ENCODE measurements at regions of chr19 and their contacts with region 1.

Region 1: DNA sequence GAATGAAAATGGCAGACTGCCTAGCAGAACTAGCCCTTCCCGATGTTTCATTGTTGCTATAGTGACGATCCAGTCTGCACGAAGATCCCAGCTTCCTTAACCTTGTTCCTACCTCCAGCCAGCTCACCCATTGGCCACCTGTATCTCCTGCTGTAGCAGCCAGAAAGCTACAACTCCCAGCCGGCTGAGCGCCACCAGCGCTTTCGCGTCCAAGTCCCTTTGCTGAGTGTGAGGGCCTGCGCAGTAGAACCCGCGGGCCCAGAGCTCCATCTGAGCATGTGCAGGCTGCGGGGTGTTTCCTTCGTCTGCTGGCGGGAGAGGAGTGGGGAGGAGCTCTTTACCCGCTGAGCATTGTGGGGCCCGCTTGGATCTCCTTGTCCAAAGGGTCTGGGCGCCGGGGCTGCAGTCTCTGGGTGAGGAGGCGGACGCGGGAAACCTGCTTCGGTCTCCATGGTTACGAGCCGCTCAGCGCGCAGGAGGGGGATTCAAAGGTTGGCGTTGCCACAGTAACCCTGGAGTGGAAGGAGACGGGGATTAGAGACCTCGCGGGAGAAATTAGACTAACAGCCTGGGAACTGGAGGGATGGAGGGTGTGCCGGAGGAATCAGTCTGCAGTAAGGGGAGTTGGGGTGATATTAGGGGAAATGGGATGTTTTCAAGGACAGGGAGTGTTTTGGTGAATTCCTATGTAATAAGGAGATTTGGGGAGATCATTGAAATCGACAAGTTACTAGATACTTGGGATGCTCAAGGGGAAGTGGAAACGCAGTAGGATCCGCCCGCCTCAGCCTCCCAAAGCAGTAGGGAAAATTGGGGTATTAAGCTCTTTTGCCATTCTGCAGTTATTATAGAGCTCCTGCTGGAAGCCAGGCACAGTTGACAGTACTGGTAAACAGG is 33.5 kb downstream of the ZSWIM9 start:
- DNase-seq: peak; percentile 97
- H3K4me3 Mint-ChIP-seq: no peak overlapping the region
- H3K27ac Mint-ChIP-seq: no peak overlapping the region
- H3K4me1 Mint-ChIP-seq: peaks cover 17% of the 10 kb centered on the region
- H3K27me3 Mint-ChIP-seq: no peaks in the 10 kb centered on the region

Region 2: GRCh38 chr19:48110350-48110966 is 93.5 kb before region 1 on chr19 and contains the start of gene PLA2G4C:
- CTCF ChIA-PET with region 1: interaction called, 14 read pairs
- POLR2A ChIA-PET with region 1: interaction called, 8 read pairs
- intact Hi-C with region 1: no loop called
- DNase-seq: peak; percentile 89
- H3K4me3 Mint-ChIP-seq: peak within 1 kb of the TSS; percentile 82
- H3K27ac Mint-ChIP-seq: peak within 1 kb of the TSS; percentile 91
- H3K4me1 Mint-ChIP-seq: peaks cover 14% of the 10 kb centered on the region
- H3K27me3 Mint-ChIP-seq: no peaks in the 10 kb centered on the region
- total RNA-seq, gene PLA2G4C: 12.4 to 13.3 TPM

Region 3: DNA sequence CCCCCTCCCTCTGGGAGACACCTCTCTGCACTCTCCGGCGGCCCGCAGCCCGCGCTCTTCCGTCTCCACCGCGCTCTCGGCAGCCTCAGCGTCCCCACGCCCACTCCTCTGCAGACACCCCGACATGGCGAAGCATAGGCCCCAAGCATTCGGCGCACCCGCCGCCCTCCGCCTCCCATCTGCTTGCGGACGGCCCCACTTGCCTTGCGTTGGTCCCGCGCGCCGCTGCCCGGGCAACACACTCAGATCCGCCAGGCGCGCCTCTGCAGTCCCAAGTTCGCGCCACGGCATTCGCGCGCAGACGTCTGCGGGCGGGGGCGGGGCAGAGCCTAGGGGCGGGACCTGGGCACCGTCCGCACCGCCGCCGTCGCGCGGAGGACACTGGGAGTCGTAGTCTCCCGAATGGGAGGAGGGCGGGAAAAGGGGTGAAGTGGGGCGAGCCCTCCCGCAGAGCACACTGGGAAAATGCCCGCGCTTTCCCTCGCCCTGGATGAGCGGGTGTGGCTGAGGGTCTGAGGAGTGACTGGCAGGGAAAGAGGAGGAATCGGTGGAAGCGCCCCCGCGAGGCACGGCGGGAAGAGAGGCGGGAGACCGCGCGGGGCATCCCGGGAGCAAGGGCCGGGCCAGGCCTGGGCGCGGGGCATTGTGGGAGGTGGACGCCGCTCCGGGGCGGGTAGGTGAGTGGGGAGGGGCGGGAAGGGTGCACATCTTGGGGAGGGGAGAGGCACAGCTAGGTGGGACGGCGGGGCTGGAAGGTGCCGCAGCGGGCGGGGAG is 33.8 kb before region 1 on chr19 and contains the starts of genes LIG1 and ZSWIM9:
- CTCF ChIA-PET with region 1: interaction called, 4 read pairs
- POLR2A ChIA-PET with region 1: interaction called, 4 read pairs
- intact Hi-C with region 1: loop called (anchors 1 kb)
- DNase-seq: peak; percentile 94
- H3K4me3 Mint-ChIP-seq: peak within 1 kb of the TSS; percentile 95
- H3K27ac Mint-ChIP-seq: peak within 1 kb of the TSS; percentile 97
- H3K4me1 Mint-ChIP-seq: peaks cover 39% of the 10 kb centered on the region
- H3K27me3 Mint-ChIP-seq: no peaks in the 10 kb centered on the region
- total RNA-seq, gene LIG1: 174 TPM
- total RNA-seq, gene ZSWIM9: 7.4 to 8.0 TPM

Region 4: DNA sequence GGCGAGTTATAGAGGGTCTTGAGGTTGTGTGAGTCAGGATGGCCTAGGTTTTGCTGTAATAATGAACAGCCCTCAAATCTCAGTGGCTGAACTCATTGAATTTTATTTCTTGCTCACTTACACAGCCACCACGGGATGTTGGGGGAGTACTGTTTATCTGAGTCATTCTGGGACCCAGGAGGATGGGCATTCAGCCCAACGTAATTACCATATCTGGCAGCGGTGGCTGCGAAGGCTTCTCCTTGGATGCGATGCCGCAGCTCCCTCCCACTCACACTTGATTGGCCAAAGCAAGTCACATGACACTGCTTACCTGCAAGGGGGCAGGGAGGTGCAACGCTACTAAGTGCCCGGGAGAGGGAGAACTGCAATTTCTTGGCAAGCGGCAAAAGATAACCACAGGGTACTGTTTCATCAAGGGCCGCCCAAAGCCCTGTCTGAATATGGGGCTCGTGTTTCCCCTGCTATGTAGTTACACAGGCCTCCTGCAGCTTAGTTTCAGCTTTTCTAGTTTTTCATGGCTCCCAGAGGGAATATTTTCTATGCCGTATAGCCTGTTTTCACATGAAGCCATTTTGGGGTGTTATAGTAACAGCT is 13.6 kb before region 1 on chr19:
- CTCF ChIA-PET with region 1: interaction called, 21 read pairs
- POLR2A ChIA-PET with region 1: interaction called, 5 read pairs
- intact Hi-C with region 1: no loop called
- DNase-seq: peak; percentile 73
- H3K4me3 Mint-ChIP-seq: no peak overlapping the region
- H3K27ac Mint-ChIP-seq: no peak overlapping the region
- H3K4me1 Mint-ChIP-seq: peaks cover 2% of the 10 kb centered on the region
- H3K27me3 Mint-ChIP-seq: no peaks in the 10 kb centered on the region

Region 5: GRCh38 chr19:48249502-48250014 is 45.6 kb after region 1 on chr19:
- CTCF ChIA-PET with region 1: interaction called, 4 read pairs
- POLR2A ChIA-PET with region 1: interaction called, 15 read pairs
- intact Hi-C with region 1: loop called (anchors 1 kb)
- DNase-seq: peak; percentile 90
- H3K4me3 Mint-ChIP-seq: peak overlapping the region; percentile 93
- H3K27ac Mint-ChIP-seq: peak overlapping the region; percentile 99
- H3K4me1 Mint-ChIP-seq: peaks cover 73% of the 10 kb centered on the region
- H3K27me3 Mint-ChIP-seq: no peaks in the 10 kb centered on the region

Region 6: DNA sequence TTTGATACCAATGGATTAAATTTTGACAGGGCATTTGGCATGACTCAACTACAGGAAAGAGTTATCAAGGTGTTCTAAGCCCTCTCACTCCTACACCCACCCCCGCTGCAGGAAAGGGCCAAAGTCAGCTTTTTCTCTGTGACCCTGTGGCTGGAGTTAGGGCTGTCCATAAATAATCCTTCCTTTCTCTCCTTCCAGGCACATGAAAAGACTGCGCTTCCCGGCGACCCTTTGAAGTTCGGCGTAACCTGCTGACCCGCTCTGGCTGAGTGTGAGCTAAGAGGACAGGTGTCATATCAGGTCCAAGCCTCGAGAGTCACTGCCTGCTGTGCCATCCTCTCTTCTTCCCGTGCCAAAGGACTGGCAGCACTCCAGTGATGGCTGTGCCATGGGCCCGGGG is 91.5 kb after region 1 on chr19:
- CTCF ChIA-PET with region 1: no interaction called
- POLR2A ChIA-PET with region 1: no interaction called
- intact Hi-C with region 1: no loop called
- DNase-seq: no peak
- H3K4me3 Mint-ChIP-seq: no peak overlapping the region
- H3K27ac Mint-ChIP-seq: no peak overlapping the region
- H3K4me1 Mint-ChIP-seq: peaks cover 7% of the 10 kb centered on the region
- H3K27me3 Mint-ChIP-seq: no peaks in the 10 kb centered on the region

Measured in activated CD4-positive, alpha-beta memory T cell treated with anti-CD3 and anti-CD28 coated beads for 36 hours (primary cell).